ENCODE measurements at regions of chr5 and their contacts with region 1.

Region 1: GRCh38 chr5:140145818-140146522 is 20.2 kb downstream of the IGIP start:
- DNase-seq: peak; percentile 61
- H3K4me3 ChIP-seq: peak overlapping the region in 1 of 3 experiments; percentile 8
- H3K27ac ChIP-seq: no peak overlapping the region
- H3K4me1 ChIP-seq: no peaks in the 10 kb centered on the region
- H3K27me3 ChIP-seq: peaks cover 0 to 6% of the 10 kb centered on the region in 2 experiments
- CTCF ChIP-seq: peak; percentile 67 to 77
- POLR2A ChIP-seq: no peak

Region 2: DNA sequence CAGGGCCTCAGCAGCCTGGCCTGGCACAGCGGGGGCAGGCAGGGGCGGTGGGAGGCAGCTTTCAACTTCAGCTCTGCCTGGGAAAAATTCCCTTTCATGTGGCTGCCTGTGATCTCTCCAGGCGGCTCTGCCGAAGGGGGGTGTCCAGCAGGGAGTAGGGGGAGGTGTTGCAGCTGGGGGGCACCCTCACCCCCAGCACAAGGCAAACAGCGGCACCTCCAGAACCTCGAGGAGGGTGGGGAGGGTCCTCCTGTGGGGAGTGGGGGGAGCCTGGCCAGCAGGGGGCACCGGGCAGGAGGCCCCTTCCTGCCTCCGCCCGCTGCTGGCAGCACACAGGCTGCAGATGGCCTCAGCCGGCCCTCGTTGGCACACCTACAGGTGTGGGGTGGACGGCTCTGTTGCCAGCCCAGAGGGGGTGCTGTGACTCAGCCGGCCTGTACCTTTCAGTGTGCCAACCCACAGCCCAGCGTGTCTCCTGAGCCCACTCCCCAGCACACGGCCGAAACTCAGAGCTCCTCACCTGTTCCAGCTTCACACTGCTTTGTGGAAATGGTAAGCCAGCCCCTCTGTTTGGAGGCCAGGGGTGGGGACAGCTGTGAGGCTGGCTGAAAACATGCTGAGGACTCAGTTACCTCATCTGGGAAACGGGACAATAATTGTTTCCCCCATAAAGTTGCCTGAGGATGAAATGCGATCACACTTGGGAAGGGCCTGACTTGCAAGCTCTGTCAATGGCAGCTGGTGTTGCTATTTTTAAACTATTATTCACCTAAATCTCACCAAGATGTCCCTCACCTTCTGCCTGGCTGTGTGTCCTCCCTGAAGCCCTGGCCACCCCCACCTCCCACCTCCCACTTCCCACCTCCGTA is 460.9 kb before region 1 on chr5:
- CTCF ChIA-PET with region 1: no interaction called
- POLR2A ChIA-PET with region 1: no interaction called
- dilution Hi-C with region 1: no loop called
- intact Hi-C with region 1: no loop called
- DNase-seq: no peak
- H3K4me3 ChIP-seq: no peak overlapping the region
- H3K27ac ChIP-seq: no peak overlapping the region
- H3K4me1 ChIP-seq: no peaks in the 10 kb centered on the region
- H3K27me3 ChIP-seq: no peaks in the 10 kb centered on the region
- CTCF ChIP-seq: no peak
- POLR2A ChIP-seq: no peak

Region 3: GRCh38 chr5:140054086-140054689 is 91.8 kb before region 1 on chr5:
- CTCF ChIA-PET with region 1: interaction called, 17 read pairs
- POLR2A ChIA-PET with region 1: no interaction called
- dilution Hi-C with region 1: no loop called
- intact Hi-C with region 1: no loop called
- DNase-seq: peak; percentile 94
- H3K4me3 ChIP-seq: peak overlapping the region in 1 of 3 experiments; percentile 44
- H3K27ac ChIP-seq: no peak overlapping the region
- H3K4me1 ChIP-seq: peaks cover 16% of the 10 kb centered on the region
- H3K27me3 ChIP-seq: peaks cover 13 to 31% of the 10 kb centered on the region in 2 experiments
- CTCF ChIP-seq: no peak
- POLR2A ChIP-seq: no peak

Region 4: GRCh38 chr5:140073296-140073695 is 72.7 kb before region 1 on chr5:
- CTCF ChIA-PET with region 1: interaction called, 379 read pairs
- POLR2A ChIA-PET with region 1: no interaction called
- dilution Hi-C with region 1: no loop called
- intact Hi-C with region 1: loop called (anchors 1 kb)
- DNase-seq: peak; percentile 31
- H3K4me3 ChIP-seq: no peak overlapping the region
- H3K27ac ChIP-seq: no peak overlapping the region
- H3K4me1 ChIP-seq: no peaks in the 10 kb centered on the region
- H3K27me3 ChIP-seq: peaks cover 11 to 31% of the 10 kb centered on the region in 2 experiments
- CTCF ChIP-seq: peak in 1 of 2 donors; percentile 28
- POLR2A ChIP-seq: no peak

Region 5: GRCh38 chr5:140107312-140108083 is 38.5 kb before region 1 on chr5:
- CTCF ChIA-PET with region 1: interaction called, 92 read pairs
- POLR2A ChIA-PET with region 1: no interaction called
- dilution Hi-C with region 1: no loop called
- intact Hi-C with region 1: loop called (anchors 2 kb)
- DNase-seq: peak; percentile 94
- H3K4me3 ChIP-seq: peak overlapping the region; percentile 51 to 77 (median 56)
- H3K27ac ChIP-seq: peak overlapping the region; percentile 53
- H3K4me1 ChIP-seq: peaks cover 14% of the 10 kb centered on the region
- H3K27me3 ChIP-seq: peaks cover 33 to 67% of the 10 kb centered on the region in 2 experiments
- CTCF ChIP-seq: peak in 1 of 2 donors; percentile 35
- POLR2A ChIP-seq: peak; percentile 74

Region 6: DNA sequence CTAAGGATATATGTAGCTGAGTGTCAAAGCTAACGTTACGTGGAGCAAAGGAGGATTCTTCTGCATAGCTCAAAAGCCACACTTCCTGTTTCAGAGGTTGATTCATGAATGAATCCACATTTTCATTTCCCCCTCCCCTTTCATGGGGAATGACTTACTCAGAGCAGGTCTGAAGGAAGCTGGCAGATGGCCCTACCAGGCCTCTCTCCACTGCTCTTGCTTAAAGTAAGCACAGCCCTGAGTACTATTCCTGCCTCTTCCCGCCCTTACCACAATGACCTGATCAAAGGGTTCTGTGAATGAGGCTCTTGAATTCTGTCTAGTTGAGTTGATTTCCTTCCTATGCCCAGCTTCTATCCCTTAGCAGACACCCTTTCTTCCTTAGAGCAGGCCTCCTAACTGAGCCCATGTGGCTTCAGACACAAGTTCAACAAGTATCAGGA is 14.0 kb before region 1 on chr5:
- CTCF ChIA-PET with region 1: interaction called, 26 read pairs
- POLR2A ChIA-PET with region 1: no interaction called
- dilution Hi-C with region 1: no loop called
- intact Hi-C with region 1: no loop called
- DNase-seq: peak; percentile 71
- H3K4me3 ChIP-seq: no peak overlapping the region
- H3K27ac ChIP-seq: no peak overlapping the region
- H3K4me1 ChIP-seq: peaks cover 14% of the 10 kb centered on the region
- H3K27me3 ChIP-seq: no peaks in the 10 kb centered on the region
- CTCF ChIP-seq: no peak
- POLR2A ChIP-seq: no peak

Region 7: DNA sequence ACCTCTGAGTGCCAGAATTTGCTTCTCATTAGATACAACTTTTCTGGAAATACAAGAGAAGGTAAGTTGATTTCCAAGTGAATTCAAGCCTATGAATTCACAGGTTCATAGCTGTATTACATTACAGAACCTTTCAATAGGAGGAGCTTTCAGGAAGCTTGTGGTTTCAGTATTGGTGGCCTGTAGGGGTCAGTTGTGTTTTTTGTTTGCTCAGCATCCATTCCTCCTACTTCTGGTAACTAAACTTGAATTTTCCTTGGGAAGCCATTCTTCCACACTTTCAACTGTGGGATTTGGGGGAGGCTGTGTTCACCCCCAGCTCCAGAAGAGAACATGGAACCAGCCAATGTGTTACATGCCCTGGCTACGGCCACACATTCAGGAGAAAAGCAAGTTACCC is 23.4 kb after region 1 on chr5:
- CTCF ChIA-PET with region 1: interaction called, 23 read pairs
- POLR2A ChIA-PET with region 1: no interaction called
- dilution Hi-C with region 1: no loop called
- intact Hi-C with region 1: no loop called
- DNase-seq: peak; percentile 12
- H3K4me3 ChIP-seq: no peak overlapping the region
- H3K27ac ChIP-seq: no peak overlapping the region
- H3K4me1 ChIP-seq: peaks cover under 1% of the 10 kb centered on the region
- H3K27me3 ChIP-seq: peaks cover 0 to 1% of the 10 kb centered on the region in 2 experiments
- CTCF ChIP-seq: no peak
- POLR2A ChIP-seq: no peak

Region 8: DNA sequence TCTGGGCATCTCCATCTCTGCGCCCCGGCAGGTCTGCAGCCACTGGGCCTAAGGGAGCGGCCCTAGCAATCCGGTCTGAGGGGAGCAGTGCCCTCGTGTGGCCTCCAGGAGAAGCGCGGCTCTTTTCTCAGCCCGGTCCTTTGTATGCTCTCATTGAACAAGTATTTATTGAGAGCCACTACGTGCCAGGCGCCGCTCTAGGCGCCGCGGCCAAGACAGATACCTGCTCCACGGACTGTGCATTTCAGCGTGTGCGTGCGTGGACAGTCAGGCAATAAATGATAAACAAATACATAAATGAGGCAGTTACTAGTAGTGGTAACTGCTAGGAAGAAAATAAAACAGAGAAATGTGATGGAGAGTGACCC is 211.7 kb after region 1 on chr5:
- CTCF ChIA-PET with region 1: interaction called, 13 read pairs
- POLR2A ChIA-PET with region 1: no interaction called
- dilution Hi-C with region 1: no loop called
- intact Hi-C with region 1: no loop called
- DNase-seq: peak; percentile 88
- H3K4me3 ChIP-seq: no peak overlapping the region
- H3K27ac ChIP-seq: no peak overlapping the region
- H3K4me1 ChIP-seq: no peaks in the 10 kb centered on the region
- H3K27me3 ChIP-seq: no peaks in the 10 kb centered on the region
- CTCF ChIP-seq: peak; percentile 94 to 97
- POLR2A ChIP-seq: no peak

Measured in endothelial cell of umbilical vein (primary cell).